ENCODE measurements at regions of chr3 and their contacts with region 1.

Region 1: DNA sequence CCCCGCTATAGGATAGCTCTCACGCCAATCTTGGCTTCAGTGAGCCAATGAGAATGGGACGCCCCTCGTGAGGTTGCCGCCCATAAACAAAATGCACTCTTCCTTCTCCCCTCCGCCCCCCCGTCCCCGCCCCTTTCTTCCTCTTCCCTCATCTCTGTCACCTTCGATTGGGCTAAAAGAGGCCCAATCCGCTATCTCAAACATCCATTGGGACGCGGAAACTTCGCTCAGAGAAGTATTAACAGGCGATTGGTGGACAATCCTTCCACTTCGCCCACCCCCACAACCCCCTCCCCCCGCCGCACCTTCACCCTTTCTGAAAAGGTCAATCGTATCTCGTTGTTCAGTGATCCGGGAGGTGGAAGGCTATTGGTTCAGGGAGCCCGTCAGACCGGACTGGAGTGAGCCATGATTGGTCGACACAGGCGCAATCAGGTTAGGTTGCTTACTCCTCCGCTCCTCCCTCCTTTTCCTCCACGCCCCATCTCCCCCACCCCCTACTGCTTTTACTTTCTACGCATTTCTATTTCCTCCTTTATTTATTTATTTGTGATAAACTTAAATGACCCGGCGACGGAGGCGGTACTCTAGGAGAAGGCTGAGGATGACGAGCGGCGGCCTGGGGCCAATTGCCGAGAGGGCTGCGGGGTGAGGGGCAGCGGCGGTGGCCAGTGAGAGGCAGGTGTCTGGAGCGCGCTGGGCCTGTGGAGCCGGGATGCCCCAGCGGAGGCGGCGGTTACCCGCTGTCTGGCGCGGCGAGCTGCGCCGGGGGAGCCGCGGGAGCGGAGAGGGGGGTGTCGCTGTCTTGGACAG is 447 bp upstream of the ZBTB20 start:
- DNase-seq: peak; percentile 98
- H3K4me3 Mint-ChIP-seq: peak overlapping the region; percentile 82
- H3K27ac Mint-ChIP-seq: peak overlapping the region; percentile 96
- H3K4me1 Mint-ChIP-seq: peaks cover 20% of the 10 kb centered on the region
- H3K27me3 Mint-ChIP-seq: no peaks in the 10 kb centered on the region

Region 2: DNA sequence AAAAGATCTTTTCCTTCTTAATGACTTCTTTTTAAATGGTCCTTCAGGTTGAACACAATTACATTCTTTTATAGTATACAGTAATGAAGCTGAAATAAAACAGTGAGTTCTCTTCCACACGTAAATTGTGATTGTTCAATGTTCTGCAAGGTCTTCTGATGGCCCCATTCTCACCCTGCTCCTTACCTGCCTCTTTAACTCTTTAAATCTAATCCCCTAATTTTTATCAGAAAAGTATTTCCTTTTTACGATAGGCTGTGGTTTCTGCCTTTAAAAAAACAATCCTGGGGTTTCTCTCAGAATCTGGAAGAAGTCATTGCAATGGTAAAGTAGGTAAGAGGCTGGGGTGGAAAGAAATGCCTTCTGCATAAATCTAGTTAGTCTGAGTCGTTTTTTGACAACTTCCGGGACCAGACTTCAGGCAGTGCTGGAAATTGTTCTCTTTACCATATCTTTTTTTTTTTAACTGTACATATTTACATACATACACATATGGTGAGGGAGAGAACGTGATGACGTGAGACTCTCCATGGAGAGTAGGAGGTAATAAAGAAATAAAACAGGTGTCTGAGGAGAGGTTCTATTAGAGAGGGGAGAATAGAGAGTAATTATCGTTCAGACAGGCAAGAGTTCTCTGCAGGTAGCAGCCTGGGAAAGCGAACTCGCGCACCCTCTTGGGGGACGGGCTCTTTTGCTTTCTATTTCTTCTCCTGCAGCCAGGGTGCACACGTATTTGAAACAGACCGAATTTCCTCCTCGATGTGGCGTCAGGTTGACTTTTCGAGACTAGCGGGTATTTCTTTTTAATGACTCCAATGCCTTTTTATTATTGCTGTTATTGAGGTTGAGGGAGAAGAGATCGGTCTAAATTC is 1615.5 kb before region 1 on chr3 and contains the start of gene SIDT1:
- CTCF ChIA-PET with region 1: no interaction called
- intact Hi-C with region 1: loop called (anchors 10 kb)
- DNase-seq: peak; percentile 82
- H3K4me3 Mint-ChIP-seq: peak within 1 kb of the TSS; percentile 97
- H3K27ac Mint-ChIP-seq: peak within 1 kb of the TSS; percentile 96
- H3K4me1 Mint-ChIP-seq: peaks cover 46% of the 10 kb centered on the region
- H3K27me3 Mint-ChIP-seq: no peaks in the 10 kb centered on the region
- total RNA-seq, gene SIDT1: 14.6 to 14.9 TPM

Region 3: DNA sequence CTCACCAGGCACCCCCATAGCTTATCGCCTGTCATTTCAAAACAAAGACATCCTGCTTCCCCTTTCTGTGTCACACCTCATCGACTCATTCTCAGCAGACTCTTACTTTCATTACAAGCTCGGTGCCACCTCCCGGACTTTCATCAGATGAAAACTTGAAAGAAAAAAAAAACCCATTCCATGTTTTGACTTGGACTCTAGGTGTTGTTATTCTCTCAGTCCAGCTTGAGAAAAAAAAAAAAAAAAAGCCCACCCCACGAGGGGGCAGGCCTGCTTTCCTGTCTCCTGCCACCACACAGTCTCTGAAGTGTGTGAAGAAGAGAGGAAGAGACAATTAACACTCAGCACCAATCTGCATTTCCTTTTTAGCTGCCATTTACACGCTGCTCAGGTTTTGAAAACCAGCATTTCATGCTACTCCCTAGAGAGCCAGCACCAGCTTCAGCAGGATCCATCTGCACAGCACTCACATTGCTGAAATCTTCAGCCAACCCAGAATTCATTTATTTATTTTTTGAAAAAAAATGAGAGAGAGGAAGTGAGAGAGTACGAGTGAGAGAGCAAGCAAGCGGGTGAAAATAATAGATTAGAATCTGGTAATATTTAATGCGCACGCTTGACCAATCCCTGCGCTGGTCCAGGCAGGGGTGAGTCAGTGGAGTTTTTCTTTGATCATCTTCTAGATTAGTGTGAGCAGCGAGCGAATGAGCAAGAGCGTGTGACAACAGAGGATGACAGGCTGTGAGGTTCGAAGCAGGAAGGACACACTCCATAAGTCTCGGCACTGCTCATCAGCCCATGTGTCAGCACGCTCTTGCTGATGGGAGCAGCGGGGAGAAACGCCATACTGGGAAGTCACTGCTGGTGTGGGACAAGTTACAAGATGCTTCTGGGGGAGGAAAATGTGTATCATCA is 933.7 kb before region 1 on chr3:
- CTCF ChIA-PET with region 1: no interaction called
- intact Hi-C with region 1: loop called (anchors 1 kb)
- DNase-seq: peak; percentile 88
- H3K4me3 Mint-ChIP-seq: no peak overlapping the region
- H3K27ac Mint-ChIP-seq: no peak overlapping the region
- H3K4me1 Mint-ChIP-seq: peaks cover 8% of the 10 kb centered on the region
- H3K27me3 Mint-ChIP-seq: no peaks in the 10 kb centered on the region

Region 4: DNA sequence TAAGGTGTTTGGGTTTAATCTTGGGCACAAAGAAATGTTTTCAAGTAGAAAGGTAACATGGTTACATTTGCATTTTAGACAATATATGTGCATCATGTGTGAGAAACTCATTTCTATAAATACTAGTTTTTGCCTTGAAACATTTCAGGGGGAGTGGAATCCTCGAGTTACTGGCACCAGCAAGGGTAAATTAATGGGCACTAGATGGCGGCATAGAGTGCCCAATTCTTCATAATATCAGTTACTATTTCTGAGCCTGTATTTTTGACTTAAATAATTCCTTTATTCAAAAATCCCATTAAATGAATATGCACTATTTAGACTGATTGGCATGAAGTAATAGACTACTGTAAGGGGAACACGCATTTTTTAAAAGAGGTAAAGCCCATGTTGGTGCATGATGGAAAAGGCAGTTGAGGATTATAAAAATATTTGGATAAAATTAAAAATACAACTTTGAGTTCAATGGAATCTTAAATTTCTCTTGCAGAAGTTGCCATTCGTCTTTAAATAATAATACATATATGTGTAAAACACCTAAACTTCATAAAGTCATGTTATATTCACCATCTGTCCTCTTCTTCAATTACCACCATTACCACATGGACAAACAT is 106.8 kb before region 1 on chr3:
- CTCF ChIA-PET with region 1: interaction called, 3 read pairs
- intact Hi-C with region 1: loop called (anchors 2 kb)
- DNase-seq: peak; percentile 65
- H3K4me3 Mint-ChIP-seq: no peak overlapping the region
- H3K27ac Mint-ChIP-seq: no peak overlapping the region
- H3K4me1 Mint-ChIP-seq: peaks cover 16% of the 10 kb centered on the region
- H3K27me3 Mint-ChIP-seq: no peaks in the 10 kb centered on the region

Region 5: GRCh38 chr3:115099986-115100571 is 47.5 kb before region 1 on chr3:
- CTCF ChIA-PET with region 1: interaction called, 5 read pairs
- intact Hi-C with region 1: loop called (anchors 1 kb)
- DNase-seq: peak; percentile 29
- H3K4me3 Mint-ChIP-seq: peak overlapping the region; percentile 83
- H3K27ac Mint-ChIP-seq: peak overlapping the region; percentile 85
- H3K4me1 Mint-ChIP-seq: peaks cover 49% of the 10 kb centered on the region
- H3K27me3 Mint-ChIP-seq: no peaks in the 10 kb centered on the region

Region 6: DNA sequence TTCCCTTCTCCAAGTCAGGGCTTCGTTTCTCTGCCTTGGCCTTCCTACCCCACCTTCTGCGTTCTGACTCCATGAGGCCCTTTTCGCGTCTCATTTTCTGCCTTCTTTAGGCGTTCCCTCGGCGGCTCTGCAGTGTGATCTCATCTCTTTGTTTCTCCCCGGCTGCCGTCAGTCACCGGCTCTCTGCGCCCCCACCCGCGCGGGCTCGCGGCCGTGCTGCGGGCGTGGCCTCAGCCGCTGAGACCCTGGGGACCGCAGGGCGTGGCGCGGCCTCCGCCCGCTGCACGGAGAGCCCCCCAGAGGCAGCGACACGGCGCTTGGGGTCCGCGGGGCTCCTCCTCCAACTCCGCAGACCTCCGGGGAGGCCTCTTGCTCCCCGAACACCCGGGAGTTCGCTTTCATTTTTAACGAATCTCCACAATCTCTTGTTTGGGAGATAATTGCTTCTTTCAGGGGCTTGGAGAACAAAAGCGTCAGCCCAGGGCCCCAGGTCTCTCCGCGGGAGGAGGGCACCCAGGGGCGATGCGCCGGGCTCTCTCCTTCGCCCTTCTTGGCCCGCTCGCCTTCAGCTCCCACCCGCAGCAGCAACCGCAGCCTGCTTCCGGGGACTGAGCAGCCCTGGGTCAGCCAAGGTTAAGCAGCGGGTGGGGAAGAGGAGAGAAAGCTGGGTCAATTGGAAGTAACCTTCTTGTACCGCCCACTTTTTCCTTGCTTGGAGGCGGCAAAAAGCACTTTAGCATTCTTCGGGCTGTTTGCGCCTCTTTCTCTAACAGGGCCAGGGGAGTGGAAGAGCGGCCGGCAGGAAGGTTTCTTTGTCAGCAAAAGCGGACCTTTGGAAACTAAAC is 511.0 kb after region 1 on chr3:
- CTCF ChIA-PET with region 1: no interaction called
- intact Hi-C with region 1: loop called (anchors 1 kb)
- DNase-seq: peak; percentile 84
- H3K4me3 Mint-ChIP-seq: peak overlapping the region; percentile 90
- H3K27ac Mint-ChIP-seq: peak overlapping the region; percentile 96
- H3K4me1 Mint-ChIP-seq: peaks cover 45% of the 10 kb centered on the region
- H3K27me3 Mint-ChIP-seq: peaks cover 3% of the 10 kb centered on the region

Measured in activated naive CD4-positive, alpha-beta T cell treated with anti-CD3 and anti-CD28 coated beads for 36 hours (primary cell).